ENCODE measurements at regions of chr11 and their contacts with region 1.

Region 1: DNA sequence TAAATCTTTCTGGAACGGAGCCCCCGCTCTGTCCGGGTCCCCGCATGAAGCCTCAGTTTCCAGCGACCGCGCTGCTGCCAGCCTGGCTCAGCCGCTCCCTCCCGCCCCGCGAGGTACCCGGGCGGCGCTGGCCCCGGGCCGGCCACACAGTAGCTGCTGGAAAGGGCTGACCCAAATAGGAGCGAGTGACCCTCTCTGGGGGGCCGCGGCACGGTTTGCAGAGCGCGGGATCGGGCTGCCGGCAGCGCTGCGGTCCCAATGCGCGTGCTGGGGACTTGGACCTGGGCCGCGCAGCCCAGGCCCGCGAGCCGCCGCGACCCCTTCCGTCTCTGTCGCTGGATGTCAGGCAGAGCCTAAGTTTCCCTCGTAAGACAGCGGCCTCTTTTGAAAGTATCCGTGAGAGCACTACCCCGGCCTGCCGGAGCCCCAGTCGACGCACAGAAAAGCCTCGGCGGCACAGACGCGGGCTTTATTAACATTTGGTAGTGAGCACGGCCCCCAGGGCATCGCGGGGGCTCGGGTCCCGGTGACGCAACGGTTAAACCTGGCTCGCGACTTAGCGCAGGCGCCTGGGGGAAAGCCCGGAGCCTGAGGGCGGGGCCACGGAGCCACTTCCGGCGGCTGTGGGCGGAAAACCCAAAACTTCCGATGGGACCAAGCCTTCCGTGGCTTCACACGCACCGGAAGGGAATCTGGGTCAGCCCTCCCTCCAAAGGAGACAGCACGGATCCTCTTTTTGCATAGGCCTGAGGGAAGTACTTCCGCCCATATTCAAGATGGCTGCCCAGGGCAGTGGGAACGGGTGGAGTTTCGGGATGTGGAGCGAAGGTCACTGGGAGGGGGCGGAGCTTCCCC is 14.9 kb downstream of the BAD start:
- DNase-seq: peak; percentile 98
- ATAC-seq: peak; percentile 86
- H3K4me3 ChIP-seq: peak overlapping the region; percentile 96
- H3K27ac ChIP-seq: peak overlapping the region; percentile 81
- H3K4me1 ChIP-seq: peaks cover 12% of the 10 kb centered on the region
- H3K27me3 ChIP-seq: no peaks in the 10 kb centered on the region
- CTCF ChIP-seq: peak in 1 of 3 experiments; percentile 32; a peak in 2 of 6 replicates
- EP300 ChIP-seq: no peak
- POLR2A ChIP-seq: peak; percentile 77
- RAD21 ChIP-seq: no peak

Region 2: DNA sequence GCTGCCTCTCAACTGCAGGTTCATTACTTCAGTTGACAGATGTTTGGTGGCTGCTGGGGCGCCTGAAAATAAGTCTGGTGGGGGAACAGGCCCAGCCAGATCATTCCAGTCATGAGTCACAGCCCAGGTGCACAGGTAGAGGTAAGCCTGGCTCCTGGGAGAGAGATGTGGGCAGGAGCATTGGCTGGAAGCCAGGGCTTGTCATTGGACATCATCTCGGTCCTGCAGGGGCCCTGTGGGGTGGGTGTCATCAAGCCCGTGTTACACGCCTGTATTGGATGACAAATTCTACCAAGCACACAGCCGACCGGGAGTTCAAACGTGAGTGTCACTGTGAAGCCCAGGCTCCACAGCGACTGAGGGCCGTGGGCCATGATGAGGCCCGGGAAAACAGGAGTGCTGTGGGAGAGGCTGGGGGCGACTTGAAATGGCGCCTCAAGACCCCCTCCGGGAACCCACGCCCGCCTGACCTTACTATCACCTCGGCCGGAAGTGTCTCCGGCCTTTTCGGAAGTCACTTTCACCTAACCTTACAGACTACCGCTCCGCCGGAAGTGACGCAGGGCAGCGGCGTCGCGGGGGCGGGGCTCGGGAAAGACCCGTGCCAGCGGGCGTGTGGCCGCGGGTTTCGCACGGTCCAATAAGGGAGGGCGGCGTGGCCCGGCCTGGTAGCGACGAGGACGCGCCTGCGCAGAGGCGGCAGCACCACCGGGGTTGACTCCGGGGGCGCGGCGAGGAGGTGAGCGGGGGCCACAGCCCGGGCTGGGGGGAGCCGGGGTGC is 29.0 kb before region 1 on chr11 and contains the start of gene FKBP2:
- CTCF ChIA-PET with region 1: interaction called, 7 read pairs
- POLR2A ChIA-PET with region 1: interaction called, 71 read pairs
- RAD21 ChIA-PET with region 1: interaction called, 16 read pairs
- SMC1A ChIA-PET with region 1: no interaction called
- in situ Hi-C with region 1: no loop called
- intact Hi-C with region 1: no loop called
- DNase-seq: peak; percentile 87
- ATAC-seq: peak; percentile 70
- H3K4me3 ChIP-seq: peak within 1 kb of the TSS; percentile 89
- H3K27ac ChIP-seq: peak within 1 kb of the TSS; percentile 92
- H3K4me1 ChIP-seq: peaks cover 42% of the 10 kb centered on the region
- H3K27me3 ChIP-seq: no peaks in the 10 kb centered on the region
- CTCF ChIP-seq: no peak
- EP300 ChIP-seq: no peak; a peak in 1 of 4 replicates
- POLR2A ChIP-seq: peak; percentile 94
- RAD21 ChIP-seq: no peak
- polyA plus RNA-seq, gene FKBP2: 1.8 to 26.8 TPM

Region 3: GRCh38 chr11:64246871-64247728 is 22.5 kb before region 1 on chr11 and contains the start of gene PPP1R14B:
- CTCF ChIA-PET with region 1: interaction called, 23 read pairs
- POLR2A ChIA-PET with region 1: interaction called, 71 read pairs
- RAD21 ChIA-PET with region 1: interaction called, 16 read pairs
- SMC1A ChIA-PET with region 1: interaction called, 5 read pairs
- in situ Hi-C with region 1: no loop called
- intact Hi-C with region 1: loop called (anchors 2 kb)
- DNase-seq: no peak
- ATAC-seq: peak; percentile 75
- H3K4me3 ChIP-seq: peak within 1 kb of the TSS; percentile 91
- H3K27ac ChIP-seq: peak within 1 kb of the TSS; percentile 90
- H3K4me1 ChIP-seq: peaks cover 17% of the 10 kb centered on the region
- H3K27me3 ChIP-seq: no peaks in the 10 kb centered on the region
- CTCF ChIP-seq: 0 out of 6 replicates have a peak, but pooled peaks of 1 of the 3 experiments have one; percentile 6
- EP300 ChIP-seq: no peak
- POLR2A ChIP-seq: peak; percentile 13
- RAD21 ChIP-seq: no peak
- polyA plus RNA-seq, gene PPP1R14B: 8.4 to 27.7 TPM

Region 4: GRCh38 chr11:64284048-64284961 is 14.7 kb after region 1 on chr11 and contains the start of gene BAD:
- CTCF ChIA-PET with region 1: interaction called, 39 read pairs
- POLR2A ChIA-PET with region 1: interaction called, 92 read pairs
- RAD21 ChIA-PET with region 1: interaction called, 10 read pairs
- SMC1A ChIA-PET with region 1: interaction called, 16 read pairs
- in situ Hi-C with region 1: no loop called
- intact Hi-C with region 1: loop called (anchors 1 kb)
- DNase-seq: no peak
- ATAC-seq: peak; percentile 94
- H3K4me3 ChIP-seq: peak within 1 kb of the TSS; percentile 86
- H3K27ac ChIP-seq: peak within 1 kb of the TSS; percentile 91
- H3K4me1 ChIP-seq: peaks cover 7% of the 10 kb centered on the region
- H3K27me3 ChIP-seq: no peaks in the 10 kb centered on the region
- CTCF ChIP-seq: no peak
- EP300 ChIP-seq: no peak; a peak in 1 of 4 replicates
- POLR2A ChIP-seq: peak; percentile 78
- RAD21 ChIP-seq: no peak
- polyA plus RNA-seq, gene BAD: 1.5 to 7.4 TPM

Region 5: GRCh38 chr11:64317957-64318693 is 48.5 kb after region 1 on chr11 and contains the start of gene PRDX5:
- CTCF ChIA-PET with region 1: interaction called, 6 read pairs
- POLR2A ChIA-PET with region 1: interaction called, 16 read pairs
- RAD21 ChIA-PET with region 1: interaction called, 19 read pairs
- SMC1A ChIA-PET with region 1: interaction called, 5 read pairs
- in situ Hi-C with region 1: no loop called
- intact Hi-C with region 1: no loop called
- DNase-seq: peak; percentile 92
- ATAC-seq: peak; percentile 86
- H3K4me3 ChIP-seq: peak within 1 kb of the TSS; percentile 80
- H3K27ac ChIP-seq: peak within 1 kb of the TSS; percentile 99
- H3K4me1 ChIP-seq: peaks cover 9% of the 10 kb centered on the region
- H3K27me3 ChIP-seq: no peaks in the 10 kb centered on the region
- CTCF ChIP-seq: peak; percentile 41 to 91 (median 41); a peak in 5 of 6 replicates
- EP300 ChIP-seq: no peak
- POLR2A ChIP-seq: peak; percentile 86
- RAD21 ChIP-seq: peak; percentile 56; the same call in 1 of the 2 replicates
- polyA plus RNA-seq, gene PRDX5: 95.7 to 203 TPM

Region 6: GRCh38 chr11:64331557-64332371 is 62.2 kb after region 1 on chr11:
- CTCF ChIA-PET with region 1: interaction called, 12 read pairs
- POLR2A ChIA-PET with region 1: interaction called, 5 read pairs
- RAD21 ChIA-PET with region 1: interaction called, 10 read pairs
- SMC1A ChIA-PET with region 1: interaction called, 4 read pairs
- in situ Hi-C with region 1: no loop called
- intact Hi-C with region 1: no loop called
- DNase-seq: peak; percentile 80
- ATAC-seq: peak; percentile 80
- H3K4me3 ChIP-seq: no peak overlapping the region
- H3K27ac ChIP-seq: peak overlapping the region; percentile 52
- H3K4me1 ChIP-seq: peaks cover 21% of the 10 kb centered on the region
- H3K27me3 ChIP-seq: no peaks in the 10 kb centered on the region
- CTCF ChIP-seq: peak; percentile 78 to 86 (median 82)
- EP300 ChIP-seq: peak in 1 of 2 experiments; percentile 68; a peak in 1 of 4 replicates
- POLR2A ChIP-seq: peak; percentile 53; the same call in 1 of the 2 replicates
- RAD21 ChIP-seq: peak; percentile 53

Region 7: GRCh38 chr11:64358907-64359711 is 89.5 kb after region 1 on chr11 and contains the start of gene RPS6KA4:
- CTCF ChIA-PET with region 1: interaction called, 18 read pairs
- POLR2A ChIA-PET with region 1: no interaction called
- RAD21 ChIA-PET with region 1: interaction called, 9 read pairs
- SMC1A ChIA-PET with region 1: interaction called, 4 read pairs
- in situ Hi-C with region 1: no loop called
- intact Hi-C with region 1: no loop called
- DNase-seq: no peak
- ATAC-seq: peak; percentile 85
- H3K4me3 ChIP-seq: peak within 1 kb of the TSS; percentile 69
- H3K27ac ChIP-seq: peak within 1 kb of the TSS; percentile 72
- H3K4me1 ChIP-seq: peaks cover 36% of the 10 kb centered on the region
- H3K27me3 ChIP-seq: no peaks in the 10 kb centered on the region
- CTCF ChIP-seq: no peak
- EP300 ChIP-seq: no peak
- POLR2A ChIP-seq: peak; percentile 82
- RAD21 ChIP-seq: no peak
- polyA plus RNA-seq, gene RPS6KA4: 0.34 to 0.73 TPM